HepG2 (cell line): ENCODE measurements at regions of chr1 and their contacts with region 1.

Region 1: GRCh38 chr1:56584910-56585528 is 5.7 kb upstream of the PLPP3 start:
- DNase-seq: peak; percentile 66
- ATAC-seq: 0 out of 3 replicates have a peak, but pooled peaks have one; percentile 27
- H3K4me3 ChIP-seq: no peak overlapping the region
- H3K27ac ChIP-seq: no peak overlapping the region
- H3K4me1 ChIP-seq: peaks cover 38% of the 10 kb centered on the region
- H3K27me3 ChIP-seq: no peaks in the 10 kb centered on the region
- CTCF ChIP-seq: peak; percentile 81
- EP300 ChIP-seq: no peak
- POLR2A ChIP-seq: no peak
- RAD21 ChIP-seq: peak; percentile 87

Region 2: GRCh38 chr1:55375617-55376258 is 1209.3 kb before region 1 on chr1:
- CTCF ChIA-PET with region 1: interaction called, 8 read pairs
- POLR2A ChIA-PET with region 1: no interaction called
- in situ Hi-C with region 1: loop called (anchors 10 kb)
- intact Hi-C with region 1: loop called (anchors 5 kb)
- DNase-seq: peak; percentile 34
- ATAC-seq: peak; percentile 62
- H3K4me3 ChIP-seq: no peak overlapping the region
- H3K27ac ChIP-seq: no peak overlapping the region
- H3K4me1 ChIP-seq: no peaks in the 10 kb centered on the region
- H3K27me3 ChIP-seq: no peaks in the 10 kb centered on the region
- CTCF ChIP-seq: peak; percentile 76
- EP300 ChIP-seq: no peak
- POLR2A ChIP-seq: no peak
- RAD21 ChIP-seq: peak; percentile 52; the same call in 1 of the 2 replicates

Region 3: GRCh38 chr1:56189946-56190792 is 394.9 kb before region 1 on chr1:
- CTCF ChIA-PET with region 1: interaction called, 5 read pairs
- POLR2A ChIA-PET with region 1: interaction called, 13 read pairs
- in situ Hi-C with region 1: loop called (anchors 5 kb)
- intact Hi-C with region 1: no loop called
- DNase-seq: peak; percentile 99
- ATAC-seq: peak; percentile 94
- H3K4me3 ChIP-seq: peak overlapping the region; percentile 52 to 65 (median 58); a peak in 5 of 6 replicates
- H3K27ac ChIP-seq: peak overlapping the region; percentile 91
- H3K4me1 ChIP-seq: peaks cover 47% of the 10 kb centered on the region
- H3K27me3 ChIP-seq: no peaks in the 10 kb centered on the region
- CTCF ChIP-seq: peak; percentile 86
- EP300 ChIP-seq: peak; percentile 98 to 99
- POLR2A ChIP-seq: peak in 1 of 2 experiments; percentile 94; a peak in 2 of 4 replicates
- RAD21 ChIP-seq: peak; percentile 71

Region 4: DNA sequence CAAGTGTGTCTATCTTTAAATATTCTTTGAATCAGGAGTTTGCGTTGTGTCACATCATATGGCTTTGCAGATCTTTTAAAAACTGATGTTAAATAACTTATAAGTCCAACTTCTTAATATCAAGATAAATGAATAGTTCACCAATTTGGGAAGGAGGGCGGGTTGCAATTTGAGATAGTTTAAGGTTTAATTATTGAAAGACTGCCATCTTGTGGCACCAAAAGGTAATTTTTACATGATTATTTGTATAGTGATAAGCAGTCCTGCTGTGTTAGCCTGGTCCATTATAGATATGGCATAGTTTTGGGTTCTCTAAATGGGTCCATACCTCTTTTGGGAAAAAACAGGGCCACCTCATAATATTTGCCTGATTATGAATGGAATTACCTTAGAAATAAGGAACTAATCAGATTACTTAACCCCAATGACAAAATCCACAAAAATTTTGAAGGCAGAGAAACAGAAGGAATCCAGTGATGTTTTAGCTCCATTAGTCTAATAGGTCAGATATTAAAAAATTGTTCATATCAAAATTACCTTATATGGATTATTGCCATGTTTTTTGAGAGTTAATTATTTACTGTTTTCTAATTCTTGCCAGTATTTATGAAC is 124.4 kb after region 1 on chr1:
- CTCF ChIA-PET with region 1: interaction called, 5 read pairs
- POLR2A ChIA-PET with region 1: no interaction called
- in situ Hi-C with region 1: no loop called
- intact Hi-C with region 1: loop called (anchors 5 kb)
- DNase-seq: peak; percentile 56
- ATAC-seq: peak; percentile 76
- H3K4me3 ChIP-seq: no peak overlapping the region
- H3K27ac ChIP-seq: no peak overlapping the region
- H3K4me1 ChIP-seq: no peaks in the 10 kb centered on the region
- H3K27me3 ChIP-seq: no peaks in the 10 kb centered on the region
- CTCF ChIP-seq: peak; percentile 65
- EP300 ChIP-seq: no peak
- POLR2A ChIP-seq: no peak
- RAD21 ChIP-seq: peak; percentile 28; the same call in 1 of the 2 replicates